Dendritic cell treated with granulocyte-macrophage colony-stimulating factor and Interleukin-4, amounts not matched to agents 40 ng/mL and 50 ng/mL, for 4 days (primary cell): ENCODE measurements at regions of chr5 and their contacts with region 1.

Region 1: GRCh38 chr5:148179234-148179824 is 11.0 kb downstream of the SPINK14 start:
- H3K4me3 Mint-ChIP-seq: no peak overlapping the region
- H3K27ac Mint-ChIP-seq: no peak overlapping the region
- H3K4me1 Mint-ChIP-seq: peaks cover 24% of the 10 kb centered on the region
- H3K27me3 Mint-ChIP-seq: peaks cover 6% of the 10 kb centered on the region

Region 2: DNA sequence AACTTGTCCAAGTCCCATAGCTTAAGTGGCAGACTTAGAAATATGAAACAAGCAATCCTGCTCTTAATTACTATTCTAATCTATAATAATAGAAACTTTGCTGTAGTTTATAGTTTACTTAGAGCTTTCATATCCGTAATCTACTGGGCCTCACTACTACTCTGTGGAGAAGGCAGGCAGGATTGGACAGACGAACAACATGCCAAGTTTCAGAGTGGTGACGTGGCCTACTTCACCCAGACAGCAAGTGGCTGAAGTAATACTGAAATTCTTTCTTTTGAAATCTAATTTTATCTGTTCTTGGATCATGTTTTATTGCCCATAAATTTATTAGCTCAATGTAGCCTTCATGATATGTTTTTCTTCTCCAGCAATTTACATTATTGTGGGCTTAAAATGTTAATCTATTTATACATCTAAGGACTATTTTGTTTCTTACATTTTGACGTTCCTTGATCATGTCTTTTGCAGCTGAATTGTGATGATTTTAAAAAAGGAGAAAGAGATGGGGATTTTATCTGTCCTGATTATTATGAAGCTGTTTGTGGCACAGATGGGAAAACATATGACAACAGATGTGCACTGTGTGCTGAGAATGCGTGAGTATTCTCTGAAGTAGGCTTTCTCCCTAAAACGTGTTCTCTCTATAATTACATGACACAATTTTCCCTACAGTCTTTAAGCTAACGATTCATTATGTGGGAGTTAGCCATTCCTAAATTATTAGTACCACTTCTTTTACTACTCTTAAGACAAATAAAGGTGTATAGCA is 93.2 kb before region 1 on chr5:
- intact Hi-C with region 1: no loop called
- H3K4me3 Mint-ChIP-seq: no peak overlapping the region
- H3K27ac Mint-ChIP-seq: no peak overlapping the region
- H3K4me1 Mint-ChIP-seq: no peaks in the 10 kb centered on the region
- H3K27me3 Mint-ChIP-seq: no peaks in the 10 kb centered on the region

Region 3: GRCh38 chr5:148248894-148249293 is 69.6 kb after region 1 on chr5:
- intact Hi-C with region 1: no loop called
- H3K4me3 Mint-ChIP-seq: no peak overlapping the region
- H3K27ac Mint-ChIP-seq: no peak overlapping the region
- H3K4me1 Mint-ChIP-seq: no peaks in the 10 kb centered on the region
- H3K27me3 Mint-ChIP-seq: peaks cover 5% of the 10 kb centered on the region

Region 4: DNA sequence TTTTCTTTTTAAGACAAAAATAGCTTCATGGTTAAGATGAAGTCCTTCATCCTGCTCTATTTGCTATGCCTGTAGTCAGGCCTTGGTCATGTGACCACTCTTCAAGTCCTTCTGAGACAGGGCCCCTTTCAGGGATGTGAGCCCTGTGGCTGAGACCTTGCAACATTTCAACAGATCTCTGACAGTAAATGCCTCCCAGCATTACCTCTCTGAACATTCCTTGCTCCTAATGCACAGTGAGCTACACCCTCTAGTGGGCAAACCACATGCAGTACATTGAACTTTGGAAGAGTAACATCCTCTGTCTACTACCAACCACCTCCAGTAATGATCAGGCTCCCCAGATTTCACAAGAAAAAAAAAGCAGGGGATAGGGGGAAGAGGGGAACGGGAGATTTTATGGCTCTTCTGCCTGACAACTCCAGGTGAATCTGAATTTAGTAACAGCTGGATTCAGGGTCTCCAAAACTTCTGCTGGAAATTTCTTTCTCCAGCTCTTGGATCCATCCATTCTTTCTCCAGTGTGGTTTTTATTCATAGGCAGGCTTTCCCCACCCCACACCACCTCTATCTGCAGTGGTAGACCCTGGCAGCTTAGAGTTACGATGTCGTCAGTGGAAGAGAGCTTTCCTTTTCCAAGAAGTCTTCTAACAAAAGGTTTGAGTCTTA is 195.5 kb after region 1 on chr5:
- intact Hi-C with region 1: loop called (anchors 1 kb)
- H3K4me3 Mint-ChIP-seq: no peak overlapping the region
- H3K27ac Mint-ChIP-seq: no peak overlapping the region
- H3K4me1 Mint-ChIP-seq: peaks cover 16% of the 10 kb centered on the region
- H3K27me3 Mint-ChIP-seq: no peaks in the 10 kb centered on the region

Region 5: DNA sequence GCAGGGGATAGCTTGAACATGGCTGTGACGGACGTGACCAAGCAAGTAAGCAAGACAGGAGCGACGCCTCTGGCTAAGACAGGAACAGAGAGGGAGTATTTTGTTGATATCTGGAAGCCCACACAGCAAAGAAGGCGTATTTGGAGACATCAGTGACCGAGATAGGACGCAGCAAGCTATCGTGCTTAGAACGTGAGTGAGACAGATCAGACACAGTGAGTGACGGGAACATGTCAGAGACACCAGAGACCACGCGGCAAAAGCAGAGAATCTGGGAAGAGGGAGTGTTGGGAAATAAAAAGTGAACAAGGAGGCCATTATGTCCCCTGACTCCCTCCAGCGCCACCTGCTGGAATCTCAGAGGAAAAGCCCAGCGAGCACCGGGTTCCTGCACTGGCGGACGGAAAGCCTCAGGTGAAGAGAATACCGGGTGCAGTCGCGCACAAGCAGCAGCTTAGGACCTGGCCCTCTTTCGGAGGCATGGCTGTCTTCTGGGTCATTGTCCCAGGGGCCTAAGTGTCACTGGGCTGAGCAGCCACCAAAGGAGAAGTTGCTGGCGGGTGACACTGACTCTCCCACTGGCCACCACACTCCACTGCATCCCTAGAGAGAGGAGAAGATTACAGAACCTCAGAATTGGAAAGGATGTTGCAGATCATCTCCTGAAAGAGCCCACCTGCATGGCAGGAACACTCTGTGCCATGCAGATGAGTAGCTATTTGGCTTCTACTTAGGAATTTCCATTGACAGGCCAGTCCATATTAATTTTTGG is 303.5 kb after region 1 on chr5:
- intact Hi-C with region 1: loop called (anchors 2 kb)
- H3K4me3 Mint-ChIP-seq: peak overlapping the region; percentile 48
- H3K27ac Mint-ChIP-seq: no peak overlapping the region
- H3K4me1 Mint-ChIP-seq: peaks cover 8% of the 10 kb centered on the region
- H3K27me3 Mint-ChIP-seq: peaks cover 15% of the 10 kb centered on the region